ENCODE measurements at regions of chr3 and their contacts with region 1.

Region 1: GRCh38 chr3:3200632-3201212 is 21.2 kb upstream of the CRBN start:
- DNase-seq: peak; percentile 33
- ATAC-seq: no peak; the same call in 1 of the 2 replicates
- H3K4me3 ChIP-seq: no peak overlapping the region
- H3K27ac ChIP-seq: no peak overlapping the region
- H3K4me1 ChIP-seq: no peaks in the 10 kb centered on the region
- H3K27me3 ChIP-seq: no peaks in the 10 kb centered on the region
- CTCF ChIP-seq: peak; percentile 76

Region 2: GRCh38 chr3:3179407-3180094 is 21.2 kb before region 1 on chr3 and contains the start of gene CRBN:
- CTCF ChIA-PET with region 1: no interaction called
- POLR2A ChIA-PET with region 1: no interaction called
- in situ Hi-C with region 1: no loop called
- intact Hi-C with region 1: no loop called
- DNase-seq: no peak
- ATAC-seq: peak; percentile 99
- H3K4me3 ChIP-seq: peak within 1 kb of the TSS; percentile 76 to 92
- H3K27ac ChIP-seq: peak within 1 kb of the TSS; percentile 66; the same call in 1 of the 2 replicates
- H3K4me1 ChIP-seq: peaks cover 8% of the 10 kb centered on the region
- H3K27me3 ChIP-seq: no peaks in the 10 kb centered on the region
- CTCF ChIP-seq: peak; percentile 95
- total RNA-seq, gene CRBN: 18.7 TPM

Region 3: GRCh38 chr3:3792371-3792770 is 591.6 kb after region 1 on chr3:
- CTCF ChIA-PET with region 1: no interaction called
- POLR2A ChIA-PET with region 1: no interaction called
- in situ Hi-C with region 1: no loop called
- intact Hi-C with region 1: no loop called
- DNase-seq: no peak
- ATAC-seq: no peak
- H3K4me3 ChIP-seq: no peak overlapping the region
- H3K27ac ChIP-seq: no peak overlapping the region
- H3K4me1 ChIP-seq: no peaks in the 10 kb centered on the region
- H3K27me3 ChIP-seq: peaks cover 1% of the 10 kb centered on the region
- CTCF ChIP-seq: no peak

Region 4: GRCh38 chr3:3998140-3998922 is 797.6 kb after region 1 on chr3:
- CTCF ChIA-PET with region 1: interaction called, 9 read pairs
- POLR2A ChIA-PET with region 1: no interaction called
- in situ Hi-C with region 1: no loop called
- intact Hi-C with region 1: loop called (anchors 5 kb)
- DNase-seq: peak; percentile 36
- ATAC-seq: no peak
- H3K4me3 ChIP-seq: no peak overlapping the region
- H3K27ac ChIP-seq: no peak overlapping the region
- H3K4me1 ChIP-seq: no peaks in the 10 kb centered on the region
- H3K27me3 ChIP-seq: no peaks in the 10 kb centered on the region
- CTCF ChIP-seq: peak; percentile 58

Region 5: DNA sequence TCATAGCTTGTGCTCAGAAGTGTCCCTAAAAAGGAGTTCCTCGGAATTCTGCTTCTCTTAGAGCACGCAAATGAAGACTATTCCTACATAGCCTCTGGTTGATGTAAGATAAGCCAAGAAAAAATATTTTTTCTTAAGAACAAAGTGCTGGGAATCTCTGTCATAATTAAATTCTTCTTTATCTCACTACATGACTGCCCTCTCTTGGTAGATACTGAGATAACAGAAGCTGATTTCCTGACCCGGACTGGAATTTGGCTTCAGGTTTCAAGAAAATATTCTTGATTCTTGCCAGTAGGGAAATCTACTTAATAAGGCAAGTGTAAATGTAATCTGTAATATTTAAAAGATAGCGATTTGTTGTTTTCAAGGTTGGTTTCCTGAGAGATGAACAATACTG is 1071.1 kb after region 1 on chr3:
- CTCF ChIA-PET with region 1: interaction called, 7 read pairs
- POLR2A ChIA-PET with region 1: no interaction called
- in situ Hi-C with region 1: no loop called
- intact Hi-C with region 1: loop called (anchors 5 kb)
- DNase-seq: no peak
- ATAC-seq: no peak
- H3K4me3 ChIP-seq: no peak overlapping the region
- H3K27ac ChIP-seq: no peak overlapping the region
- H3K4me1 ChIP-seq: no peaks in the 10 kb centered on the region
- H3K27me3 ChIP-seq: no peaks in the 10 kb centered on the region
- CTCF ChIP-seq: peak; percentile 53; the same call in 1 of the 2 replicates

Region 6: GRCh38 chr3:4290272-4290893 is 1089.7 kb after region 1 on chr3:
- CTCF ChIA-PET with region 1: interaction called, 10 read pairs
- POLR2A ChIA-PET with region 1: no interaction called
- in situ Hi-C with region 1: no loop called
- intact Hi-C with region 1: loop called (anchors 1 kb)
- DNase-seq: peak; percentile 61
- ATAC-seq: peak; percentile 58; the same call in 1 of the 2 replicates
- H3K4me3 ChIP-seq: no peak overlapping the region
- H3K27ac ChIP-seq: no peak overlapping the region
- H3K4me1 ChIP-seq: no peaks in the 10 kb centered on the region
- H3K27me3 ChIP-seq: peaks cover 3% of the 10 kb centered on the region; the same call in 1 of the 2 replicates
- CTCF ChIP-seq: peak; percentile 76; the same call in 1 of the 2 replicates